K562 (cell line): ENCODE measurements at regions of chr10 and their contacts with region 1.

Region 1: GRCh38 chr10:102904346-102904745 is 13.7 kb upstream of the CNNM2 start:
- DNase-seq: no peak
- ATAC-seq: no peak
- H3K4me3 ChIP-seq: no peak overlapping the region
- H3K27ac ChIP-seq: no peak overlapping the region
- H3K4me1 ChIP-seq: no peaks in the 10 kb centered on the region
- H3K27me3 ChIP-seq: no peaks in the 10 kb centered on the region
- CTCF ChIP-seq: no peak
- EP300 ChIP-seq: no peak
- POLR2A ChIP-seq: no peak
- RAD21 ChIP-seq: no peak

Region 2: DNA sequence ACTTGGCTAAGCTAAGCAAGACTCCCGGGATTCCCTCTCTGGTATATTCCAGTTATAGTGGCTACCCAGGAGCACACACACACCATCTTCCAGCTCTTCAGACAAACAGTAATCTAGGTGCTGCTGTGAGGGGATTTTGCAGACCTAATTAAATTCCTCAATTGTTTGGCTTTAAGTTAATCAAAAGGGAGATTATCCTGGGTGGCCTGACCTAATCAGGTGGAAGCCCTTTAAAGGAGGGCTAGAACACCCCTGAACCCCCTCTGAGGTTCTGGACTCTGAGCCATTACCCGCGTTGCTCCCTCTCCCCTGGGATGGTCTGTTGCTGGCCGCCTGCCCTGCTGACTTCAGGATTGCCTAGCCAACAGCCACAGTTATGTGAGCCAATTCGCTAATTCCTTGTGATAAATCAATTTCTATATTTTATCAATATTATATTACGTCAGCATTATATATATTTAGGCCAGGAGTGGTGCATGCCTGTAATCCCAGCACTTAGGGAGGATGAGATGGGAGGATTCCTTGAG is 183.5 kb before region 1 on chr10:
- CTCF ChIA-PET with region 1: no interaction called
- POLR2A ChIA-PET with region 1: no interaction called
- in situ Hi-C with region 1: loop called (anchors 5 kb)
- intact Hi-C with region 1: no loop called
- DNase-seq: no peak
- ATAC-seq: no peak
- H3K4me3 ChIP-seq: no peak overlapping the region
- H3K27ac ChIP-seq: no peak overlapping the region
- H3K4me1 ChIP-seq: peaks cover 3 to 8% of the 10 kb centered on the region in 2 experiments; a peak in 3 of 5 replicates
- H3K27me3 ChIP-seq: no peaks in the 10 kb centered on the region
- CTCF ChIP-seq: no peak
- EP300 ChIP-seq: no peak
- POLR2A ChIP-seq: no peak
- RAD21 ChIP-seq: no peak

Region 3: DNA sequence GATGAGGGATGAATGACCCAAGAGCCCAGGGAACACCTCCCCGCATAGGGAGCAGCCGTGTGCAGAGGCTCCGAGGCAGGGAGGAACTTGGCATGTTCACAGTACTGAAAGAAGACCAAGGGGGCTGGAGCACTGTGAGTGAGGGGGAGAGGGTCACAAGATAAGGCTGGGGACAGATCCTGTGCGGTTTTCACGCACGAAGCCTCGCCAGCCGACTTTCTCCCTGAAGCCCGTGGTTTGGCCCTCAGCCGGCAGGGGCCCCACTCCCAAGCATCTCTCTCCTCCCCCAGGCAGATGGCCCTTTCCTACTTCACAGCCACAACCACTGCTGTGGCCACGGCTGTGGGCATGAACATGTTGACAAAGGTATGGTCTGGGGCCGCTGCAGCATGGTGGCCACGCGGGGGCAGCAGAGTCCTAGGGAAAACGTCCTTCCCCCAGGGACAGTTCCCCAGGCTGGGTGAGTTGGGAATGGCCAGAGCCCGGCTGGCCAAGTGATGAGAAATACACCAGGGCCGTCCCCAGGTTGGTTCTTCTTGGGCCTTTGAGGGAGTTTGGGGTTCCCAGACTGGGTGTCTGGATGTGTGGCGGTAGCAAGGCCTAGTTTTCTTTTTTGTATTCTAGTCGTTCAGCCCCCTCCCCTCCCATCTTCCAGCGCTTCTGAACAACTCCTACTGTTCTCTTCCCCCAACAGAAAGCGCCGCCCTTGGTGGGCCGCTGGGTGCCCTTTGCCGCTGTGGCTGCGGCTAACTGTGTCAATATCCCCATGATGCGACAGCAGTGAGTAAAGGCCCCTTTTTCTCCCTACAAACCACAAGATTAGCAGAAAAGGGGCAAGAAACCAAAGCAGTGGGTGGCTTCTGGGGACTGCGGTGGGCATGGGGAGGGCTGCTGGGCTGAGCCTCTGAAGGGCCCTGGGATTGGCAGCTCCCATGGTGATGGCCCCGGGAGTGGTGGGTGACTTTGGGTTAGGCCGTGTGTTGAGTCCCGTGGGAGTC is 175.0 kb before region 1 on chr10:
- CTCF ChIA-PET with region 1: interaction called, 17 read pairs
- POLR2A ChIA-PET with region 1: no interaction called
- in situ Hi-C with region 1: loop called (anchors 5 kb)
- intact Hi-C with region 1: loop called (anchors 1 kb)
- DNase-seq: peak; percentile 69 to 76 (median 70)
- ATAC-seq: peak; percentile 99
- H3K4me3 ChIP-seq: no peak overlapping the region
- H3K27ac ChIP-seq: no peak overlapping the region
- H3K4me1 ChIP-seq: peaks cover 0 to 5% of the 10 kb centered on the region in 2 experiments; a peak in 1 of 5 replicates
- H3K27me3 ChIP-seq: no peaks in the 10 kb centered on the region
- CTCF ChIP-seq: peak; percentile 79 to 86 (median 82)
- EP300 ChIP-seq: no peak
- POLR2A ChIP-seq: no peak
- RAD21 ChIP-seq: peak; percentile 87 to 89

Region 4: DNA sequence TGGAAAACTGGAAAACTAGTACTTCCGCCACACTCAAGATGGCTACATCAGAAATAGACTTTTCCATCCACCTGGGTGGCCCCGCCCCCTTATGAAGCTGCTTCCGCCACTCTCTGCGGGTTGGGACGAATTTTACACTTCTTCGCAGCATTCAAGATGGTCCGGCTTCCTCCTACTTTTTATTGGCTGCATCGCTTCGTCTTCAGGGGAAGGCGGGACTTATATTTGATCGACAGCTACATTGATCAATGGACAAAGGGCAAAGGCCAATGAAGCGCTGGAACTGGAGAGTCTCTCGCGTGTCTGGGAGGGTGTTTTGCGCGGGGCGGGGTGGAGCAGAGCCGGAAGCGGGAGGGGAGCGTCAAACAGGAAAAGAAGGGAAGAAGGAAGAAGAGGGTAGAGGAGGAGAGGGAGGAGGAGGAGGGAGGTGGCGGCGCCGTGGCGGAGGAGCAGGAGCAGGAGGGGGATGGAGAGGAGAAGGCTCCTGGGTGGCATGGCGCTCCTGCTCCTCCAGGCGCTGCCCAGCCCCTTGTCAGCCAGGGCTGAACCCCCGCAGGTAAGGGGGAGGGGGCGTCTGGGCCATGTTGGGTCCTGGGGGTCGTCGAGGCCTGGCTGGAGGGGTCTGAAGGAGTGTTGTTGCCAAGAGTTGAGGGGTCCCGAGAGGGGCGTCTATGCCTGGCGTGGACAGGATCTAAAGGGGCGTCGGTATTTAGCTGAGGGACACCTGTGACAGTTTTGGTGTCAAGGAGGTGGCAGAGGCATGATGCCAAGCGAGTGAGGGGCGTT is 160.6 kb before region 1 on chr10 and contains the start of gene WBP1L:
- CTCF ChIA-PET with region 1: no interaction called
- POLR2A ChIA-PET with region 1: no interaction called
- in situ Hi-C with region 1: no loop called
- intact Hi-C with region 1: loop called (anchors 5 kb)
- DNase-seq: peak; percentile 89 to 96 (median 90)
- ATAC-seq: peak; percentile 95
- H3K4me3 ChIP-seq: peak within 1 kb of the TSS; percentile 90
- H3K27ac ChIP-seq: peak within 1 kb of the TSS; percentile 72
- H3K4me1 ChIP-seq: peaks cover 9 to 28% of the 10 kb centered on the region in 2 experiments
- H3K27me3 ChIP-seq: no peaks in the 10 kb centered on the region
- CTCF ChIP-seq: peak in 1 of 3 experiments; percentile 31; a peak in 2 of 6 replicates
- EP300 ChIP-seq: no peak; the same call in 1 of the 2 replicates
- POLR2A ChIP-seq: peak; percentile 78
- RAD21 ChIP-seq: no peak
- polyA plus RNA-seq, gene WBP1L: 3.2 to 5.3 TPM